A549 (cell line): ENCODE measurements at regions of chr17 and their contacts with region 1.

Region 1: GRCh38 chr17:49496183-49496866 is 1.2 kb downstream of the NGFR start:
- DNase-seq: peak; percentile 72 to 83
- ATAC-seq: peak; percentile 73 to 92
- H3K4me3 ChIP-seq: peak overlapping the region; percentile 50
- H3K27ac ChIP-seq: peak overlapping the region in 1 of 2 experiments; percentile 47; a peak in 1 of 6 replicates
- H3K4me1 ChIP-seq: peaks cover 22% of the 10 kb centered on the region
- CTCF ChIP-seq: peak; percentile 95
- EP300 ChIP-seq: no peak
- POLR2A ChIP-seq: no peak
- RAD21 ChIP-seq: peak; percentile 39 to 67; a peak in 4 of 5 replicates

Region 2: GRCh38 chr17:49414622-49415350 is 81.5 kb before region 1 on chr17 and contains the start of gene PHB1:
- CTCF ChIA-PET with region 1: interaction called, 30 read pairs
- POLR2A ChIA-PET with region 1: interaction called, 3 read pairs
- DNase-seq: peak; percentile 98 to 100
- ATAC-seq: peak; percentile 100
- H3K4me3 ChIP-seq: peak within 1 kb of the TSS; percentile 69
- H3K27ac ChIP-seq: peak within 1 kb of the TSS; percentile 76 to 90
- H3K4me1 ChIP-seq: peaks cover 11% of the 10 kb centered on the region
- CTCF ChIP-seq: no peak
- EP300 ChIP-seq: no peak
- POLR2A ChIP-seq: peak; percentile 89
- RAD21 ChIP-seq: no peak
- polyA plus RNA-seq, gene PHB1: 480 and 556 TPM in 2 replicates

Region 3: GRCh38 chr17:49443862-49444261 is 52.5 kb before region 1 on chr17:
- CTCF ChIA-PET with region 1: interaction called, 10 read pairs
- POLR2A ChIA-PET with region 1: no interaction called
- DNase-seq: no peak
- ATAC-seq: no peak
- H3K4me3 ChIP-seq: no peak overlapping the region
- H3K27ac ChIP-seq: no peak overlapping the region
- H3K4me1 ChIP-seq: no peaks in the 10 kb centered on the region
- CTCF ChIP-seq: no peak
- EP300 ChIP-seq: no peak
- POLR2A ChIP-seq: no peak
- RAD21 ChIP-seq: no peak

Region 4: DNA sequence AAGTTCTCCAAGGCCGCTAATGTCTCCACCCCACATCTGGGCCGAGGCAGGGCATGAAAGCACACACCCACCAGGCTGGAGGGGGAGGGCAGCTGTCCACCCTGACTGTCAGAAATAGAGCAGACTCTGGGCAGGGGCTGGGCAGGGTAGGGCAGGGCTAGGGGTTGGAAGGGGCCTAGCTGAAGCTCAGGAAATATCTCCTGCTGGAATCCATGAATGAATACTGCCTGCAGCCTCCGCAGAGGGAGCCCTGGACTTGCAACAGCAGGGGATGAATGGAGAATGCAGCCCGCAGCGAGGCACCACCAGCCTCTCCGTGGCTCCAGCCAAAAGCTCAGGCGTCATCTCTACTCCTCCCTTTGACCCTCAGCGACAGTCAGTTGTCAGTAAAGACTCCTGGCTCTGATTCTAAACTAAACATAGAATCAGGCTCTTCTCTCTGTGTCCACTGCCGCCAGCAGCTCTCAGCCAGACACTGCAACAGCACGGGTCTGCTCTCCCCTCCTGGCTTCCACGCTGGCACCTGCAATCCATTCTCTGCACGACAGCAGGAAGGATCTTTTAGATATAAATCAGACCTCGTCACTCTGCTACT is 25.1 kb before region 1 on chr17:
- CTCF ChIA-PET with region 1: interaction called, 16 read pairs
- POLR2A ChIA-PET with region 1: no interaction called
- DNase-seq: no peak
- ATAC-seq: peak in 1 of 2 experiments; percentile 32; a peak in 3 of 6 replicates
- H3K4me3 ChIP-seq: no peak overlapping the region
- H3K27ac ChIP-seq: no peak overlapping the region
- H3K4me1 ChIP-seq: no peaks in the 10 kb centered on the region
- CTCF ChIP-seq: no peak
- EP300 ChIP-seq: no peak
- POLR2A ChIP-seq: no peak
- RAD21 ChIP-seq: no peak

Region 5: DNA sequence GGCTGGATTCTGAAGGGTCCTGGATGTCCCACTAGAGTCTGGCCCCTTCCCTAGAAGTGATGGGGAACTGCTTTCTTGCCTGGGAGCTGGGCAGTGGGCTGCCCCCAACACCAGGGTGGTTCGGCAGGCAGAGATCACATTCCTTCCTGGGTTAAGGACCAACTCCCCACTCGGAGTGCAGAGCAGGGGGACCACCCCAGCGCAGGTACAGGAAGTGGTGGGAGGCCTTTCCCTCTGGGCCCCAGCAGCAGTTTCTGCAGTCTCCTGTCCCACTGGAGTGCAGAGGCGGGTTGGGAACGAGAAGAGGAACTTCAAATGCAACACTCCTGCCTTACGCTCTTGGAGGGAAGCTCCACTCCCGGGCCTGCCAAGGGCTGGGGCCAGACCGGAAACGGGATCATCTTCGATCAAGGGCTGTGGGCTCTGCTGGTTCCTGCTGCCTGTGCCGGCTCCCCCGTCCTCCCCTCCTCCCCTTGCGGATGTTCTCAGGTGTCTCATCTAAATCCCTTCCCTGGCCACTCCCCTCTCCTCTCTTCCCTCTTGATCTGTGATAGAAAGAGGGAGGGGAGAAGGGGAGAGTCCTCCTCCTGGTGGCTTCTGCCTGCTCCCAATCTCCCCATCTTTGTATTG is 10.2 kb before region 1 on chr17:
- CTCF ChIA-PET with region 1: interaction called, 62 read pairs
- POLR2A ChIA-PET with region 1: no interaction called
- DNase-seq: no peak
- ATAC-seq: no peak
- H3K4me3 ChIP-seq: no peak overlapping the region
- H3K27ac ChIP-seq: no peak overlapping the region
- H3K4me1 ChIP-seq: peaks cover 8% of the 10 kb centered on the region
- CTCF ChIP-seq: no peak
- EP300 ChIP-seq: no peak
- POLR2A ChIP-seq: no peak
- RAD21 ChIP-seq: no peak

Region 6: DNA sequence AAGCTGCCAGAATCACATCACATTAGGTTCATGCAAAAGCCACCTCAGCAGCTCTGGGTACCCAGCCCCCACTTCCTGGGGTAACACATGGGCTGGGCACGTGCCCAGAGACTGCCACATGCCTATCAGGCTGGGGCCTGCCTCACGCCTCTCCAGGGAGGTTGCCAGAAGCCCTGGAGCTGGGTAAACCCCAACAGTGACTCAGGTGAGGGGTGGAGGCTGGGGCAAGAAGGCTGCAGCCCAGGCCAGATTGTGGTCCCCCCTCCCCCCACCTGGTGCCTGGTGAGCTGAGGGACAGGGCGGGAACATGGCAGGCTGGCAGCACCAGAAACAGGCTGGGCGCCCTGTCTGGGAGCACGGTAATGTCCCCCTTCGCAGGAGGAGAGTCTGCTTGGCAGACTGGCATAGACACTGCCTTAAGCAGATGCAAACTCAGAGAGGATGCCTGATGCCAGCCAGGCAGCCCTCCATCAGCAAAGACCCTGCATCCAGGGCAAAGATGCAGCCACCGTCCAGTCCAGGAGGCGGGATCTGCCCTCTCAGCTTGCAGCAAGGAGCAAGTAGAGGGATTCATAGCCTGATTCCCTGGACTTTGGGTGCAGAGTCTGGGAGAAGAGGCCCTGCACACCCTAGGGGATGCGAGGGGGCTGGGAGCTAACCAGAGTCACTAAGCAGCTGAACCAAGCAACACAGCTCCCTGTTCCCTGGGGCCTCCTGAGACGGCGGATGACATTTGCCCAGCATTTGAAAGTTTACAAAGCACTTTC is 27.6 kb after region 1 on chr17:
- CTCF ChIA-PET with region 1: interaction called, 17 read pairs
- POLR2A ChIA-PET with region 1: no interaction called
- DNase-seq: no peak
- ATAC-seq: no peak
- H3K4me3 ChIP-seq: no peak overlapping the region
- H3K27ac ChIP-seq: no peak overlapping the region
- H3K4me1 ChIP-seq: no peaks in the 10 kb centered on the region
- CTCF ChIP-seq: no peak
- EP300 ChIP-seq: no peak
- POLR2A ChIP-seq: no peak
- RAD21 ChIP-seq: no peak